GM23248 (cell line): ENCODE measurements at regions of chr20 and their contacts with region 1.

Region 1: DNA sequence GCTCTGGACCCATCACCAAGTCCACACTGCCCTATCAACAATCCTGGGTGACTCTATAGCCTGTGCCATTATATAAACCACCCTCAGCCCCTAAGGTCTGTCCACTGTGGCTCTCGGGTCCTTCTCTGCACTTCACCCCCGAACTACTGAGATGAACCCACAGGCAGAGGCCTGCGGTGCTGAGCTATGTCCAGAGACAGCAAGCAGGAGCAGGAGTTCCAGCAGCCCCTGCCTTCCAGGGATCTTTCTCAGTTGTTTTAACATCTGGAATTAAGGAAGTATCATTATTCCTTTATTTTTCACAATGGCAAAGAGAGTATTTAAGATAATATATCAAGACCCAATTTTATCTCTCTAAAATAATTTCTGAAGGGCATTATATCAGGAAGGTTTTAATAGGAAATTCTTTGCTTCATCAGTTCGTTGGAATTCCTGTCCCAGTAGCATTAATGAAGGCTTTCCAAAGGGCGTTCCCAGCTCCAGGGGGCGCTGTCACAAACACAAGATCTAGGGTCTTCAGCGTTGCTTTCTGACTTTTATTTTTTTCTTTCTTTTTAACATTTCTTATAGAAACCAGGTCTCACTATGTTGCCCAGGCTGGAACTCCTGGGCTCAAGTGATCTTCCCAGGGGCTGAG is 27.3 kb downstream of the RRBP1 start:
- DNase-seq: peak; percentile 71
- H3K4me3 ChIP-seq: no peak overlapping the region
- H3K27ac ChIP-seq: peak overlapping the region; percentile 68
- H3K4me1 ChIP-seq: peaks cover 49% of the 10 kb centered on the region
- H3K27me3 ChIP-seq: no peaks in the 10 kb centered on the region

Region 2: GRCh38 chr20:18164356-18164755 is 509.6 kb after region 1 on chr20:
- in situ Hi-C with region 1: loop called (anchors 25 kb)
- DNase-seq: peak; percentile 56
- H3K4me3 ChIP-seq: no peak overlapping the region
- H3K27ac ChIP-seq: no peak overlapping the region
- H3K4me1 ChIP-seq: no peaks in the 10 kb centered on the region
- H3K27me3 ChIP-seq: no peaks in the 10 kb centered on the region